HCT116 (cell line): ENCODE measurements at regions of chr5 and their contacts with region 1.

Region 1: DNA sequence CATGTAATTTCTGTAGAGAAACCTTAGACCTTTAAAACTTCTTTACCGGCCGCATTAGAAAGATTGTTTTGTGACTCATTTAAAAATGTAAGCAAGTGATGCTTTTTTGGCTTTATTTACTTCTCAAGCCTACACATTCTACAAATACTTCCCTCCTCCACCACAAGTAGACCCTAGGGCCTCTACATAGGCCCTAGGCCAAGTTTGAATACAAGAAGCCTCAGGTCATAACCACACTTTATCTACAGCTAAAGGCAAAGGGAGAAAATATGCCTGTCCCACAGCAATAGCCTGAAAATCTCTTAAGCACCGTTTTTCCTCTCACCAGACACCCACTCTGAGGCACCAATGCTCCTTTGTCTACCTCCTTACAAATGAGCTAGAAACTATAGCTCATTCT is 53.9 kb downstream of the CSNK1A1 start:
- DNase-seq: no peak
- ATAC-seq: 0 out of 2 replicates have a peak, but pooled peaks have one; percentile 36
- H3K4me3 ChIP-seq: no peak overlapping the region
- H3K27ac ChIP-seq: no peak overlapping the region
- H3K4me1 ChIP-seq: peaks cover 0 to 10% of the 10 kb centered on the region in 2 experiments; a peak in 1 of 4 replicates
- H3K27me3 ChIP-seq: no peaks in the 10 kb centered on the region
- CTCF ChIP-seq: no peak
- POLR2A ChIP-seq: no peak
- RAD21 ChIP-seq: no peak

Region 2: DNA sequence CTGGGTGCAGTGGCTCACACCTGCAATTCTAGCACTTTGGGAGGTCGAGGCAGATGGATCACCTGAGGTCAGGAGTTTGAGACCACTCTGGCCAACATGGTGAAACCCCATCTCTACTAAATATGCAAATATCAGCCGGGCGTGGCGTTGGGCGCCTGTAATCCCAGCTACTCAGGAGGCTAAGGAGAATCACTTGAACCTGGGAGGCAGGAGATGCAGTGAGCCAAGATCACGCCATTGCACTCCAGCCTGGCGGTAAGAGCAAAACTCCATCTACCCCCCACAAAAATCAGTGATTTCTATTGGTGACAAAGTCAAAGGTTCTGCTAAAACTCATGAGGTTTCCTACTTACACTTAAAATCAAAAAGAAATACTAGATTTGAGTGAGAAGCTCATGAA is 35.1 kb after region 1 on chr5:
- CTCF ChIA-PET with region 1: no interaction called
- POLR2A ChIA-PET with region 1: no interaction called
- RAD21 ChIA-PET with region 1: no interaction called
- intact Hi-C with region 1: loop called (anchors 5 kb)
- DNase-seq: no peak
- ATAC-seq: no peak
- H3K4me3 ChIP-seq: no peak overlapping the region
- H3K27ac ChIP-seq: no peak overlapping the region
- H3K4me1 ChIP-seq: peaks cover 4 to 39% of the 10 kb centered on the region in 2 experiments
- H3K27me3 ChIP-seq: no peaks in the 10 kb centered on the region
- CTCF ChIP-seq: no peak
- POLR2A ChIP-seq: no peak
- RAD21 ChIP-seq: no peak

Region 3: GRCh38 chr5:149702934-149703646 is 205.7 kb after region 1 on chr5:
- CTCF ChIA-PET with region 1: no interaction called
- POLR2A ChIA-PET with region 1: no interaction called
- RAD21 ChIA-PET with region 1: no interaction called
- intact Hi-C with region 1: no loop called
- DNase-seq: no peak
- ATAC-seq: no peak
- H3K4me3 ChIP-seq: no peak overlapping the region
- H3K27ac ChIP-seq: no peak overlapping the region
- H3K4me1 ChIP-seq: no peaks in the 10 kb centered on the region
- H3K27me3 ChIP-seq: no peaks in the 10 kb centered on the region
- CTCF ChIP-seq: no peak
- POLR2A ChIP-seq: no peak
- RAD21 ChIP-seq: no peak